ENCODE measurements at regions of chr19 and their contacts with region 1.

Region 1: GRCh38 chr19:10251792-10252694 is at the start of gene MRPL4:
- DNase-seq: peak; percentile 94
- CTCF ChIP-seq: no peak

Region 2: DNA sequence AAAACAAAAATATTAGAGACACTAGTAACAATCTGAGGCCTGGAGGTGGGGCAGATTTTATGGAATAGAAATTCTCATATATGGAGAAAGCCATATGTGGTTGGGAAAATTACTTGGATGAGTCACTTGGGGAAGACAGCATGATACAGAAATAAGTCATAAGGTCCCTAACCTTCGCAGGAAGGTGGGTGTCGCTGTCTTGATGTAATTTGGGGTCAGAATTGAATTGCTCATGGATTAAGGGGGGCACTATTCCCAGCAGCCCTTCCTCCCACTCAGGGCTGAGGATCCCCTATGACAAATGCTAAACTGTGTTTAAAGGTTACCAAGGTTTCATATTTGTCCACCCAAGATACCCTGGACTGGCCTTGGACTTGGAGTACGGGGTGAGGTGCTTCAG is 233.8 kb before region 1 on chr19:
- CTCF ChIA-PET with region 1: no interaction called
- POLR2A ChIA-PET with region 1: no interaction called
- DNase-seq: no peak
- CTCF ChIP-seq: no peak

Region 3: DNA sequence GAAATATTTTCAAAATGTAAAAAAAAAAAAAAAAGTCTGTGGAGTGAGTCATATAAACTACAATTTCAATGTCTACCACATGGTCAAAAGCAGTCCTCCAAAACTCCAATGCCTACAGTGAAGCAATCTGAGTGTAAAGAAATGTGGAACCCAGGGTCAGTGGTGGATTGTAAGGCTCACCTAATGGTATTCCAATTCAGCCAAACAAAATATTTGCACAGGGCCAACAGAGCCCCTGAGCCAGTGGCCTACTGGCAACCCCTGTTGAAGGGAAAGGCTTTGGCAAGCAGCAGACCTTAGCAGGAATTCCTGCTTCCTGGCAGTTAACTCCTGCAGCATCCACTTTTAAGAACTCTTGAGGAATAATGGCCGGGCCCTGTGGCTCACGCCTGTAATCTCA is 60.7 kb before region 1 on chr19:
- CTCF ChIA-PET with region 1: interaction called, 11 read pairs
- POLR2A ChIA-PET with region 1: no interaction called
- DNase-seq: no peak
- CTCF ChIP-seq: no peak

Region 4: DNA sequence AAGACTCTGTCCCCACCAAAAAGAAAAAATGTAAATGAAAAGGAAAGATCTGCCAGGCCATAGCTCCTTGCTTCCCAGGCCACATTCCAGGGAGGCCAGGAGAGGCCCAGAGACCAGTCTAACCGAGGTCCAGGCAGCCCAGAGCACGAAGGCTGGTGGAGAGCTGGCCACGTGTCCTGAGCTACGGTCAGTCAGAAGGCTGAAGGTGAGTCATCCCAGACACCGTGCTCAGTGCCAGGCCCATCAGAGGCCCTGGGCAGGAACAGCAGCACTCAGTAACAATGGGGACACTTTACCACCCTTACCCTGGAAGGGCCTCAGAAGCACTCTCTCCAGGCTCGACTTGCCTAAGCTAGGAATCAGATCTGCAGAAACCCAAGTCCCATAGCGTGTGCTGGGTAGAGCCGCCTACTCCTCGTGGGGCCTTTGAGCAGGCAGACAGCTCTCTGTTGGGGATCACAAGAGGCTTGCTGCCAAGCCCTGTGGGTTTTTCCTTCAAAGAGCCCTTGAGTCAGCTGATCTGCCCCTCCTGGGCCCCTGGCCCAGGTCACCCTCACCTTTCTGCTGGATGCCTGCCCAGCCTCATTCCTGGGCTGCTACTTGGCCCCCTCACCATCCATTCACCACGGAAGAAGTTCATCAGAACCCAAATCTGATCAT is 45.7 kb before region 1 on chr19:
- CTCF ChIA-PET with region 1: interaction called, 12 read pairs
- POLR2A ChIA-PET with region 1: no interaction called
- DNase-seq: no peak
- CTCF ChIP-seq: no peak

Region 5: GRCh38 chr19:10219678-10220077 is 32.4 kb before region 1 on chr19:
- CTCF ChIA-PET with region 1: interaction called, 72 read pairs
- POLR2A ChIA-PET with region 1: no interaction called
- DNase-seq: peak; percentile 74
- CTCF ChIP-seq: peak; percentile 57

Region 6: DNA sequence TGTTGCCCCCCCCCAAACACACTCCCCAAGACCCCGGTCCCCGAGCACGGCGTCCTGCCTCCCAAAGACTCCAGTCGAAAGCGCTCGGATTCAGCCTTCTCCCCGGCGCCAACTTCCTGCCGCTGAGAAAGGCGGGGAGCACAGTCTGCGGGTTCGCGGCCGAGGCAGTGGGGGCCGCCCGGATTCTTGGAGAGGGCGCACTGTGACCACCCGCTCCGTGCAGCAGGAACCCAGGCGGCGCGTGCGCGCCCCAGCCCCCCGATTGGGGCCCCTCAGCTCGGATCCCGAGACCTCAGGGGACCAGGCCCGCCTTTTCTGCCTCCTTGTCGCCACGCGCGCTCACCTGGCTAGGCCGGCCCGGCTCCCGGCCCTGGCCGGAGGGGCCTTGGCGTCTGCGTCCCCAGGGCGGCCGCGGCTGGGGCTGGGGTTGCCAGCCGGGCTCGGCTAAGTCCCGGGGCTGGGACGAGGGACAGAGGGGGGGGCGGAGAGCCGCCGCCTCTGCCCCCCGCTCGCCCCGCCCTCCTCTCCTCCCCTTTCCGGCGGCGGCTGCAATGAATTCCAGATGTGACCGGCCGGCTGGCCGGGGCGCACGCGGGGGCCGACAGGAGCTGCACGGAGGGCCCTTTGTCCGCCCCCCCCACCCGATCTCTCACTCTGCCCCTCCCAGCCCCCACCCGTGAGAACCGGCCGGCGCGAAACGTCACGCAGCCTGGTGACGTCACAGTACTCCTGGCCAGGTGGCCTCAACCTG is 21.0 kb before region 1 on chr19 and contains the start of gene S1PR2:
- CTCF ChIA-PET with region 1: interaction called, 72 read pairs
- POLR2A ChIA-PET with region 1: interaction called, 3 read pairs
- DNase-seq: peak; percentile 88
- CTCF ChIP-seq: no peak

Region 7: GRCh38 chr19:10238172-10238783 is 13.8 kb before region 1 on chr19:
- CTCF ChIA-PET with region 1: interaction called, 25 read pairs
- POLR2A ChIA-PET with region 1: no interaction called
- DNase-seq: no peak
- CTCF ChIP-seq: no peak

Region 8: GRCh38 chr19:10615429-10616023 is 363.5 kb after region 1 on chr19:
- CTCF ChIA-PET with region 1: no interaction called
- POLR2A ChIA-PET with region 1: no interaction called
- DNase-seq: no peak
- CTCF ChIP-seq: no peak

Measured in GM10248 (cell line).